Caco-2 (cell line): ENCODE measurements at regions of chr5 and their contacts with region 1.

Region 1: DNA sequence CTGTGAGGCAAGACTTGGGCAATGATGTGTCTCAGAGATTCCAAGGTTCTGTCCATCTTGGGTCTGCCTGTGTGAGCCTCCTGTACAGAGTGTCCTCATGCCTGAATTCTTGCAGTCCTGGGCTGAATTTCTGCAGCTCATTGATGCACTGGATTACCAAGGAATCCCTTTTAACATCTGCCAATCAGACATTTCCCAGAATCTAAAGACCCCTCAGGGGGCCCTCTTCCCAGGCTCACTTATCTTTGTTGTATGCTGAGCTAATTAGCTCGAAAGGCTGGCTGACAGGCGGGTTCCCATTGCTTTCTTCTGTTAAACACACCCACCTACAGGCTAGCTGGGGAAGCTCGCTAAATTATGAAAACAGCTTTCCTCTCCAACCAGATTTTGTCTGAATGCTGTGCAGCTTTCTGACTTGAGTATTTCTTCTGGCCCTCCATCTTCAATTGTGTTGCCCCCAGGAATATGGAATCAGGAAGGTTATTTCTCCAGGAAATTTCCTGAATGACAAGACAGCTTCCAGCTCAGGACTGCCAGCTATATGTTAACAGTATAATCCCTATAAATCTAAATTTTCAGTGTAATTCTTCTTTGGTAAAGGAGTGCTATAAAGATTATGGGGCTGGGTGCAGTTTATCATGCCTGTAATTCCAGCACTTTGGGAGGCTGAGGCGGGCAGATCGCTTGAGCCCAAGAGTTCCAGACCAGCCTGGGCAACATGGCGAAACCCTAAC is at the start of gene LIX1:
- DNase-seq: peak; percentile 63 to 66
- H3K4me3 ChIP-seq: no peak within 1 kb of the TSS
- H3K4me3 Mint-ChIP-seq: peak within 1 kb of the TSS; percentile 63
- H3K27ac Mint-ChIP-seq: peak within 1 kb of the TSS; percentile 29
- H3K4me1 ChIP-seq: peaks cover 12% of the 10 kb centered on the region
- H3K4me1 Mint-ChIP-seq: peaks cover 16% of the 10 kb centered on the region
- H3K27me3 ChIP-seq: no peaks in the 10 kb centered on the region
- H3K27me3 Mint-ChIP-seq: no peaks in the 10 kb centered on the region
- CTCF ChIP-seq: peak; percentile 69 to 76
- total RNA-seq, gene LIX1: 4.0 and 4.1 TPM in 2 replicates

Region 2: GRCh38 chr5:96752341-96753016 is 390.2 kb before region 1 on chr5:
- CTCF ChIA-PET with region 1: interaction called, 13 read pairs
- POLR2A ChIA-PET with region 1: no interaction called
- intact Hi-C with region 1: loop called (anchors 5 kb)
- DNase-seq: peak in 1 of 2 experiments; percentile 71
- H3K4me3 ChIP-seq: no peak overlapping the region
- H3K4me3 Mint-ChIP-seq: no peak overlapping the region
- H3K27ac Mint-ChIP-seq: no peak overlapping the region
- H3K4me1 ChIP-seq: no peaks in the 10 kb centered on the region
- H3K4me1 Mint-ChIP-seq: no peaks in the 10 kb centered on the region
- H3K27me3 ChIP-seq: no peaks in the 10 kb centered on the region
- H3K27me3 Mint-ChIP-seq: no peaks in the 10 kb centered on the region
- CTCF ChIP-seq: peak; percentile 61 to 70

Region 3: GRCh38 chr5:96997265-96997859 is 145.3 kb before region 1 on chr5:
- CTCF ChIA-PET with region 1: interaction called, 90 read pairs
- POLR2A ChIA-PET with region 1: interaction called, 4 read pairs
- intact Hi-C with region 1: loop called (anchors 1 kb)
- DNase-seq: peak in 1 of 2 experiments; percentile 32
- H3K4me3 ChIP-seq: no peak overlapping the region
- H3K4me3 Mint-ChIP-seq: no peak overlapping the region
- H3K27ac Mint-ChIP-seq: no peak overlapping the region
- H3K4me1 ChIP-seq: peaks cover 4% of the 10 kb centered on the region
- H3K4me1 Mint-ChIP-seq: peaks cover 18% of the 10 kb centered on the region
- H3K27me3 ChIP-seq: no peaks in the 10 kb centered on the region
- H3K27me3 Mint-ChIP-seq: no peaks in the 10 kb centered on the region
- CTCF ChIP-seq: peak; percentile 47 to 49

Region 4: DNA sequence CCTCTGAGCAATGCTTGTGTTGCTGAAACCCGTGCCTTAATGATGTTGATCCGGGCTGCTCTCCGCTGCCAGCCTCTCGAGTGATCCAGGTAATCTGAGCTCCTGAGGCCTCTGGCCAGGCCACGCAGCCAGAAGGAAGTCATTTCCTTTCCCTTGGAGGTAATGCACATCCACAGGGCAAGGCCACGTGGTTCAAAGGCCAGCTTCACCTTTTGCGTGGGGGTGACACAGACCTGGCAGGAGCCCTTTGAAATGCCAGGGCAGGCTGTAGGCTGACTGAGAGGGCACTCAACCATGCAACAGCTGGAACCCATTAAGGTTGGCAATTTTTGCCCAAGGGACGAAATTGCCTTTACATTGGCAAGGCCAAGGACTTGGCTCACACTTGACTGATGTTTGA is 80.6 kb before region 1 on chr5:
- CTCF ChIA-PET with region 1: interaction called, 8 read pairs
- POLR2A ChIA-PET with region 1: no interaction called
- intact Hi-C with region 1: loop called (anchors 1 kb)
- DNase-seq: no peak
- H3K4me3 ChIP-seq: no peak overlapping the region
- H3K4me3 Mint-ChIP-seq: no peak overlapping the region
- H3K27ac Mint-ChIP-seq: no peak overlapping the region
- H3K4me1 ChIP-seq: no peaks in the 10 kb centered on the region
- H3K4me1 Mint-ChIP-seq: no peaks in the 10 kb centered on the region
- H3K27me3 ChIP-seq: no peaks in the 10 kb centered on the region
- H3K27me3 Mint-ChIP-seq: no peaks in the 10 kb centered on the region
- CTCF ChIP-seq: no peak

Region 5: GRCh38 chr5:97094579-97095317 is 47.9 kb before region 1 on chr5:
- CTCF ChIA-PET with region 1: interaction called, 4 read pairs
- POLR2A ChIA-PET with region 1: no interaction called
- intact Hi-C with region 1: loop called (anchors 5 kb)
- DNase-seq: no peak
- H3K4me3 ChIP-seq: no peak overlapping the region
- H3K4me3 Mint-ChIP-seq: no peak overlapping the region
- H3K27ac Mint-ChIP-seq: no peak overlapping the region
- H3K4me1 ChIP-seq: peaks cover 15% of the 10 kb centered on the region
- H3K4me1 Mint-ChIP-seq: peaks cover 11% of the 10 kb centered on the region
- H3K27me3 ChIP-seq: no peaks in the 10 kb centered on the region
- H3K27me3 Mint-ChIP-seq: no peaks in the 10 kb centered on the region
- CTCF ChIP-seq: no peak

Region 6: GRCh38 chr5:97576956-97577355 is 434.3 kb after region 1 on chr5:
- CTCF ChIA-PET with region 1: no interaction called
- POLR2A ChIA-PET with region 1: no interaction called
- intact Hi-C with region 1: no loop called
- DNase-seq: no peak
- H3K4me3 ChIP-seq: no peak overlapping the region
- H3K4me3 Mint-ChIP-seq: no peak overlapping the region
- H3K27ac Mint-ChIP-seq: no peak overlapping the region
- H3K4me1 ChIP-seq: no peaks in the 10 kb centered on the region
- H3K4me1 Mint-ChIP-seq: no peaks in the 10 kb centered on the region
- H3K27me3 ChIP-seq: no peaks in the 10 kb centered on the region
- H3K27me3 Mint-ChIP-seq: no peaks in the 10 kb centered on the region
- CTCF ChIP-seq: no peak